Sigmoid colon (tissue), 7 donors: ENCODE measurements at regions of chr4 and their contacts with region 1.

Region 1: GRCh38 chr4:42519803-42520417 is 122.6 kb downstream of the SHISA3 start:
- DNase-seq: no peak
- H3K4me3 ChIP-seq: no peak overlapping the region
- H3K27ac ChIP-seq: no peak overlapping the region
- H3K4me1 ChIP-seq: peaks cover 0 to 9% (median 4%) of the 10 kb centered on the region in 4 donors
- H3K27me3 ChIP-seq: no peaks in the 10 kb centered on the region
- CTCF ChIP-seq: peak in 3 of 4 experiments; percentile 54 to 67 (median 60)
- EP300 ChIP-seq: no peak
- POLR2A ChIP-seq: no peak

Region 2: DNA sequence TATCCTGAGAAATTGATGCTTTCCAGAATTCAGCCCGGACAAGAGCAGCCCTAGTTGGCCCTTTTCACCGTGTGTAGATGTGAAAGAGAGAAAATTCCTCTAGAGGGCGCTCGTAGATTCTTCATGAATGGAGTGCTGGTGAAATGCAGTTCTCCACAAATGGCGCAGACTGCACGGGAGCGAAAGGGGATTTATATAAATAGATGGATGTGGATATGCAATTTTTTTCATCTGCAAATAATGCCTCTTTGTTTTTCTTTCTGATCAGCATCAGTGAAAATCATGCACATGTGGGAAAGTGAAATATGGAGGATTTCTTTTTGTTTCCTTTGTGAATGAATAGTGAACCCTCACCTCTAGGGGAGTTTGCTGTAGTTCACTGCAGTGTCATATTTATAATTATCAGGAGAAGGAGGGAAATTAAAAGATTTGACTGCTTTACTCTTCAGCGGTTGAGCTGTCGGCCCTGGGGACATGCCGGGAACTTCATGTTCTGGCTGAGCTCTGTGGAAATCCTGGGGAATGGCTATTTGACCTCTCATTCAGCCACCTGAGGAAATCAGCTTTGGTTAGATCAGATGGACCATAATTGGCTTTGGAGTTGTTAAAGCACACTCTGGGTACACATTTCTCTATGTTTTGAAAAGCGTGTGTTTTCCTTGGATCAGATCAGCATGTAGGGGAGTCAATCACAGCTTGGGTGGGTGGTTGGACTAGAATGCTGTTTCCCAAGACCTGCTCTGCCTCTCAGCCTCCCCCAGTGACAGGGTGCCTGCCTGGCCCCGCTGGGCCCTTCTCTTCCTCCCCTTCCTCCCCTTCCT is 237.6 kb before region 1 on chr4:
- intact Hi-C with region 1: loop called (anchors 1 kb)
- DNase-seq: no peak
- H3K4me3 ChIP-seq: no peak overlapping the region
- H3K27ac ChIP-seq: no peak overlapping the region
- H3K4me1 ChIP-seq: no peaks in the 10 kb centered on the region
- H3K27me3 ChIP-seq: no peaks in the 10 kb centered on the region
- CTCF ChIP-seq: peak; percentile 12 to 69 (median 48)
- EP300 ChIP-seq: no peak
- POLR2A ChIP-seq: no peak

Region 3: GRCh38 chr4:42320822-42321388 is 199.0 kb before region 1 on chr4:
- intact Hi-C with region 1: no loop called
- DNase-seq: no peak
- H3K4me3 ChIP-seq: no peak overlapping the region
- H3K27ac ChIP-seq: no peak overlapping the region
- H3K4me1 ChIP-seq: no peaks in the 10 kb centered on the region
- H3K27me3 ChIP-seq: no peaks in the 10 kb centered on the region
- CTCF ChIP-seq: no peak
- EP300 ChIP-seq: no peak
- POLR2A ChIP-seq: no peak

Region 4: GRCh38 chr4:42371306-42372252 is 148.3 kb before region 1 on chr4:
- intact Hi-C with region 1: loop called (anchors 10 kb)
- DNase-seq: no peak
- H3K4me3 ChIP-seq: no peak overlapping the region
- H3K27ac ChIP-seq: no peak overlapping the region
- H3K4me1 ChIP-seq: no peaks in the 10 kb centered on the region
- H3K27me3 ChIP-seq: no peaks in the 10 kb centered on the region
- CTCF ChIP-seq: no peak
- EP300 ChIP-seq: no peak
- POLR2A ChIP-seq: no peak

Region 5: GRCh38 chr4:42643685-42644084 is 123.8 kb after region 1 on chr4:
- intact Hi-C with region 1: no loop called
- DNase-seq: no peak
- H3K4me3 ChIP-seq: no peak overlapping the region
- H3K27ac ChIP-seq: no peak overlapping the region
- H3K4me1 ChIP-seq: no peaks in the 10 kb centered on the region
- H3K27me3 ChIP-seq: no peaks in the 10 kb centered on the region
- CTCF ChIP-seq: no peak
- EP300 ChIP-seq: no peak
- POLR2A ChIP-seq: no peak

Region 6: GRCh38 chr4:42954963-42955669 is 435.2 kb after region 1 on chr4:
- intact Hi-C with region 1: no loop called
- DNase-seq: peak; percentile 64
- H3K4me3 ChIP-seq: no peak overlapping the region
- H3K27ac ChIP-seq: no peak overlapping the region
- H3K4me1 ChIP-seq: peaks cover 0 to 15% (median 0%) of the 10 kb centered on the region in 4 donors
- H3K27me3 ChIP-seq: no peaks in the 10 kb centered on the region
- CTCF ChIP-seq: no peak
- EP300 ChIP-seq: no peak
- POLR2A ChIP-seq: no peak